ENCODE measurements at regions of chr9 and their contacts with region 1.

Region 1: GRCh38 chr9:8419596-8420275 is 620.2 kb upstream of the DMAC1 start:
- DNase-seq: no peak
- ATAC-seq: no peak
- H3K4me3 ChIP-seq: no peak overlapping the region
- H3K27ac ChIP-seq: no peak overlapping the region
- H3K4me1 ChIP-seq: no peaks in the 10 kb centered on the region
- H3K27me3 ChIP-seq: no peaks in the 10 kb centered on the region
- CTCF ChIP-seq: no peak
- EP300 ChIP-seq: no peak
- POLR2A ChIP-seq: no peak
- RAD21 ChIP-seq: no peak

Region 2: DNA sequence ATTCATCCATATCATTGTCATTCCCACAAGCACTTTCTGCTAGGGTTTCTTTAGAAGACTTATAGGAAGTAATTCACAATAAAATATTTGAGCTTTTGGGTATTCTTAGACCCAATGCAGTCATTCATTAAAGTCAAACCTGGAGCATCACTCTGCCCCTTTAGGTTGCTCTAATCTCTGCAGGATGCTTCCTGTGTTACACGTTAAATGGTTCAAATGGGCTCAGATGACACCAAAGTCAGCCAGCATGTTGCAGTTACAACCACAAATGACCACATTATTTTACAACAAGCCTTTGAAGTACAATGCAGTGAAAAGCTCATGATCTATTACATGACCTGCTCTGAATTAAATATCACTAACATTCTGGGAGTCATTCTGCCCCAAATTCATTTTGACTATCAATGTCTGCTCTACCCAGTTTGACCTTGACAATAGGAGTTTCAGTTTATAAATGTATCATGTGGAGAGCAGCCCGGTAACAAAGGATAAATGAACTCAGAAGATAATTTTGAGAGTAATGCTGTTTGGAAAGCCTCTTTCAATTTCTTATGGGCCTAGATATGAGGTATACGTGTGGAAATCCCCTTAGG is 48.4 kb after region 1 on chr9:
- CTCF ChIA-PET with region 1: no interaction called
- POLR2A ChIA-PET with region 1: interaction called, 4 read pairs
- RAD21 ChIA-PET with region 1: no interaction called
- SMC1A ChIA-PET with region 1: no interaction called
- in situ Hi-C with region 1: no loop called
- intact Hi-C with region 1: loop called (anchors 5 kb)
- DNase-seq: no peak
- ATAC-seq: no peak
- H3K4me3 ChIP-seq: no peak overlapping the region
- H3K27ac ChIP-seq: no peak overlapping the region
- H3K4me1 ChIP-seq: no peaks in the 10 kb centered on the region
- H3K27me3 ChIP-seq: no peaks in the 10 kb centered on the region
- CTCF ChIP-seq: no peak
- EP300 ChIP-seq: no peak
- POLR2A ChIP-seq: no peak
- RAD21 ChIP-seq: no peak